ENCODE measurements at regions of chrX and their contacts with region 1.

Region 1: GRCh38 chrX:15930585-15930984 is 76.0 kb upstream of the AP1S2 start:
- DNase-seq: no peak
- ATAC-seq: peak; percentile 80
- H3K4me3 Mint-ChIP-seq: no peak overlapping the region
- H3K27ac Mint-ChIP-seq: no peak overlapping the region
- H3K4me1 Mint-ChIP-seq: peaks cover 33% of the 10 kb centered on the region
- H3K27me3 Mint-ChIP-seq: no peaks in the 10 kb centered on the region
- CTCF ChIP-seq: no peak

Region 2: GRCh38 chrX:15971696-15972095 is 41.1 kb after region 1 on chrX:
- CTCF ChIA-PET with region 1: interaction called, 12 read pairs
- POLR2A ChIA-PET with region 1: no interaction called
- DNase-seq: no peak
- ATAC-seq: no peak
- H3K4me3 Mint-ChIP-seq: no peak overlapping the region
- H3K27ac Mint-ChIP-seq: peak overlapping the region; percentile 72; the same call in 1 of the 2 replicates
- H3K4me1 Mint-ChIP-seq: peaks cover 27% of the 10 kb centered on the region
- H3K27me3 Mint-ChIP-seq: no peaks in the 10 kb centered on the region; the same call in 1 of the 2 replicates
- CTCF ChIP-seq: no peak

Region 3: GRCh38 chrX:16123222-16123786 is 192.7 kb after region 1 on chrX and contains the start of gene GRPR:
- CTCF ChIA-PET with region 1: interaction called, 17 read pairs
- POLR2A ChIA-PET with region 1: no interaction called
- DNase-seq: peak; percentile 82
- ATAC-seq: peak; percentile 99
- H3K4me3 Mint-ChIP-seq: peak within 1 kb of the TSS; percentile 74
- H3K27ac Mint-ChIP-seq: peak within 1 kb of the TSS; percentile 83
- H3K4me1 Mint-ChIP-seq: peaks cover 45% of the 10 kb centered on the region
- H3K27me3 Mint-ChIP-seq: peaks cover 3% of the 10 kb centered on the region; the same call in 1 of the 2 replicates
- CTCF ChIP-seq: peak; percentile 58
- total RNA-seq, gene GRPR: 8.9 to 18.4 TPM (median 18.0 TPM) in 3 replicates

Region 4: GRCh38 chrX:16212436-16212835 is 281.9 kb after region 1 on chrX:
- CTCF ChIA-PET with region 1: interaction called, 15 read pairs
- POLR2A ChIA-PET with region 1: no interaction called
- DNase-seq: no peak
- ATAC-seq: peak; percentile 61
- H3K4me3 Mint-ChIP-seq: no peak overlapping the region
- H3K27ac Mint-ChIP-seq: peak overlapping the region; percentile 49; the same call in 1 of the 2 replicates
- H3K4me1 Mint-ChIP-seq: peaks cover 41% of the 10 kb centered on the region
- H3K27me3 Mint-ChIP-seq: no peaks in the 10 kb centered on the region
- CTCF ChIP-seq: no peak